ENCODE measurements at regions of chr3 and their contacts with region 1.

Region 1: GRCh38 chr3:57555738-57556458 is at the start of gene PDE12:
- DNase-seq: peak; percentile 86
- H3K4me3 Mint-ChIP-seq: peak within 1 kb of the TSS; percentile 97
- H3K27ac Mint-ChIP-seq: peak within 1 kb of the TSS; percentile 93
- H3K4me1 Mint-ChIP-seq: peaks cover 37% of the 10 kb centered on the region
- H3K27me3 Mint-ChIP-seq: no peaks in the 10 kb centered on the region
- total RNA-seq, gene PDE12: 25.9 to 27.7 TPM

Region 2: DNA sequence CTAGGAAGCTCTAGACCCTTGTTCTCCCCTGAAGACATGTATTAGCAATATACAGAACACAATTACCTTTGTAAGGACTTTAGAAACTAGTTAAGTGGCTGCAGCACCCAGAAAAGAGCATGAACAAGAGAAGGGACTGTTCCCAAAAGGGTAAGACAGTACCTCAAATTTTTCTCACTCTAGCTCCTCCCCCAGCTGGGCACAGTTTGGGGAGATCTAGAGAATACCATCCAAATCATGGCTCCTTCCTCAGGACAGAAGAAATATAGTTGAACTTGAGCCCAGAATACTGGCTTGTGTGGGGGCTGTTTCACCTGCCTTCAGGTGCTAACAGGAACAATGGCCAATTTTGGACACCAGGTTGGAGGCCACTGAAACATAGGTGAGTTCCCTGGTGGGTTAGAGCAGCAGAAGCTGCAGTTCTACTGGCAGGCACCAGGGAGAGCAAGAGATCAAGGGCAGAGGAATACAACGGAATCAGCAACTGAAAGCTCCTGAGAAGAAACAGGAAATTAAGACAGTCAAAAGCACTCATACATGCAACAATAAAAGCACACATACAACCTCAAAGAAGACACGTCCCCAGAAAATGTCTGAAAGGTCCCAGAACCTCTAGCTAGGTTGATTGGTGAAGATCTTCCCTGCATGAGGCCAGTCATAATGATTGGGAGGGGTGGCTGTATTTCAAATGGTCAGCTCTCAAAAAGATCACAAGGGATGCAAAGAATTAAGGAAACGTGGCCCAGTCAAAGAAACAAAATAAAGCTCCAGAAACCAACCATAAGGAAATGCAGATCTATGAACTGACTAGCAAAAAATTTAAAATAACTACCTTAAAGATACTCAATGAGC is 158.5 kb before region 1 on chr3:
- CTCF ChIA-PET with region 1: interaction called, 10 read pairs
- POLR2A ChIA-PET with region 1: interaction called, 9 read pairs
- DNase-seq: peak; percentile 67
- H3K4me3 Mint-ChIP-seq: no peak overlapping the region
- H3K27ac Mint-ChIP-seq: no peak overlapping the region
- H3K4me1 Mint-ChIP-seq: peaks cover 11% of the 10 kb centered on the region
- H3K27me3 Mint-ChIP-seq: peaks cover 18% of the 10 kb centered on the region

Region 3: DNA sequence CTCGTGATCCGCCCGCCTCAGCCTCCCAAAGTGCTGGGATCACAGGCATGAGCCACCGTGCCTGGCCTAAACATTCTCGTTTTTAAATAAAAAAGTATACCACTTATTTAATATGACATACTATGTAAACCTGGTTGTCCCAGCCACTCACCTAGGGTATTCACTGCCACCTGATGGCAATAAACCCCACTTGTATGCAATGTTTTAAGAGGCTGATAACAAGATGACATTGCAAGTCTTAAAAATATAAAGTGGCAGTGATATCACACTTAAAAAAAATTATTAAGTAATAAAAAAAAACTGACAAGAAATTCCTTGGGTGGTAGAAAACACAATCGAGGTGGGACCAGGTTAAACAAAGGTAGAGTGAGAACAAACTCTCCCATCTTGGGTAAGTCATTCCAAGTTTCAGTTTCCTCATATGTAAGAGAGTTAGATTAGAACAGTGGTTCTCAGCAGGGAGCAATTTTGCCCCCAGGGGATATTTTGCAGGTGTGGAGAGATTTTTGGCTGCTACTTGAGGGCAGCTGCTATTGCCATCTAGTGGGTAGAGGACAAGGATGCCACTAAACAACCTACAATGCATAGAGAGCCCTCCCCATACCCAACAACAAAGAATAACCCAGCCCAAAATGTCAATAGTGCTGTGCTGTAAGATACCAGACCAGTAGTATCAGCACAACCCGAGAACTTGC is 26.7 kb after region 1 on chr3:
- CTCF ChIA-PET with region 1: no interaction called
- POLR2A ChIA-PET with region 1: interaction called, 17 read pairs
- DNase-seq: no peak
- H3K4me3 Mint-ChIP-seq: no peak overlapping the region
- H3K27ac Mint-ChIP-seq: no peak overlapping the region
- H3K4me1 Mint-ChIP-seq: peaks cover 12% of the 10 kb centered on the region
- H3K27me3 Mint-ChIP-seq: no peaks in the 10 kb centered on the region

Region 4: DNA sequence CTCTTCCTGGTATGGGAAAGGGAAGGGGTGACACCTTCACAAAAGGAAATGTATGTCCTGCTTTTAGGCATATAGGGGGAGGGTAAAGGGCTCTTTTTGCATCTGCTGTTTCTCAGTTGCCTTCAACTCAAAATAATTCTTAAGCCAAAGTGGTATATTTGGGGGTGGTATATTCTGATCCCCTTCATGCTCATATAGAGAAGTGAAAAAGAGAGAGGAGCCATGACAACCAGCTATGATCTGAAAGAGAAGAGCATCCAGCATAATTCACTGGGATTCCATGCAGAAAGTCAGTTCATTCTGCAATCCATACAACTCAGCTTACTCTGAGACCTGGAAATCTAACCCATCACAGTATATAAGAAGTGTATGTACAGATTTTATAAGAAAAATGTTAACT is 114.6 kb after region 1 on chr3:
- CTCF ChIA-PET with region 1: no interaction called
- POLR2A ChIA-PET with region 1: interaction called, 10 read pairs
- DNase-seq: no peak
- H3K4me3 Mint-ChIP-seq: no peak overlapping the region
- H3K27ac Mint-ChIP-seq: no peak overlapping the region
- H3K4me1 Mint-ChIP-seq: peaks cover 32% of the 10 kb centered on the region
- H3K27me3 Mint-ChIP-seq: no peaks in the 10 kb centered on the region

Region 5: DNA sequence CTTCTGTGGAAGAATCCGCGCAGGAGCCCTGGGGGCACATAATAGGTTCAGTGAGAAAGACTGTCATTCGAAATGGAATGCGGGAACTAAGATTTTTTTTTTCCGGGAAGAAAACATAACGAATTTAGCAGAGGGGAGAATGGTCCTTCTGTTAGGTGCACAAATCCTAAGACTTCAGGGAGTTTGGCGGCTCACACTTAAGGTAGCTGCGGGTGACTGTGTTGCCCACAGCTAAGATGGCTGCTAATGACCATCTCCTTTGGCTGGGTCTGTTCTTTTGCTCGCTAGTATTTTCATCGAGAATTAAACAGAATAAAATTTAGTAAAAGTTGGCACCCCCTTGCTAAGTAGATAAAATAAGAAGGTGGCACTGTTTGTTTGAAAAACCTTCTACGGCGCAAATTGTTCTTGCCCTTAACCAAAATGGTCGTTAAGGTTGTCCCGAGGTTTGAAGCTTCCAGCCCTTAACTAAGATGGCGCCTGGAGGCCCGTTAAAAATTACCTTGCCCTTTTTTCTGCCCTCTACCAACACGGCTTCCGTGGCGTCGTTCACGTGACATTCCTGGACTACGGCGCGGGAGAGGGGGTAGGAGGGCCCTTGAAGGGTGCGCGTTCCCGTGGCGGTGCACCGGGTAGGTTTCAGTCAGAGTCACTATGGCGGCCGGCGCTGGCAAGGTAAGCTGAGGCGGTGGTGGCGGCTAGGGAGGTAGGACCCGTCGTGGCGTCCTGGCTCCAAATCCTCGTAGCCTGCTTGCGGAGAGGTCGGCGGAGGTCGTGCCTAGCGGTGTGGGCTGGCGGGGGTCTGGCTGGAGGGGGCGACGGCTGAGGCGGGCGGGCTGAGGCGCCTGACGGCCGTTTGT is 200.0 kb after region 1 on chr3 and contains the start of gene SLMAP:
- CTCF ChIA-PET with region 1: no interaction called
- POLR2A ChIA-PET with region 1: interaction called, 21 read pairs
- DNase-seq: peak; percentile 97
- H3K4me3 Mint-ChIP-seq: peak within 1 kb of the TSS; percentile 97
- H3K27ac Mint-ChIP-seq: peak within 1 kb of the TSS; percentile 84
- H3K4me1 Mint-ChIP-seq: peaks cover 43% of the 10 kb centered on the region
- H3K27me3 Mint-ChIP-seq: peaks cover 5% of the 10 kb centered on the region
- total RNA-seq, gene SLMAP: 53.4 to 55.6 TPM

Measured in activated CD4-positive, alpha-beta memory T cell treated with anti-CD3 and anti-CD28 coated beads, Interleukin-2, amount 10 ng/mL, durations not matched to agents 7 days and 5 days (primary cell).